Pancreas (tissue), 10 donors: ENCODE measurements at regions of chr17 and their contacts with region 1.

Region 1: GRCh38 chr17:11589716-11590115 is 8.6 kb upstream of the DNAH9 start:
- DNase-seq: peak in 4 of 6 donors; percentile 26 to 80 (median 72)
- ATAC-seq: peak; percentile 88 to 96 (median 94)
- H3K4me3 ChIP-seq: no peak overlapping the region
- H3K27ac ChIP-seq: no peak overlapping the region
- H3K4me1 ChIP-seq: peaks cover 0 to 10% (median 8%) of the 10 kb centered on the region in 3 donors
- H3K27me3 ChIP-seq: no peaks in the 10 kb centered on the region
- CTCF ChIP-seq: no peak

Region 2: GRCh38 chr17:11251561-11252107 is 338.1 kb before region 1 on chr17:
- intact Hi-C with region 1: no loop called
- DNase-seq: no peak
- ATAC-seq: peak in 3 of 4 donors; percentile 16 to 36 (median 33)
- H3K4me3 ChIP-seq: no peak overlapping the region
- H3K27ac ChIP-seq: no peak overlapping the region
- H3K4me1 ChIP-seq: no peaks in the 10 kb centered on the region
- H3K27me3 ChIP-seq: no peaks in the 10 kb centered on the region
- CTCF ChIP-seq: no peak

Region 3: GRCh38 chr17:11467639-11468038 is 122.1 kb before region 1 on chr17:
- intact Hi-C with region 1: no loop called
- DNase-seq: no peak
- ATAC-seq: no peak
- H3K4me3 ChIP-seq: no peak overlapping the region
- H3K27ac ChIP-seq: no peak overlapping the region
- H3K4me1 ChIP-seq: no peaks in the 10 kb centered on the region
- H3K27me3 ChIP-seq: no peaks in the 10 kb centered on the region
- CTCF ChIP-seq: no peak

Region 4: DNA sequence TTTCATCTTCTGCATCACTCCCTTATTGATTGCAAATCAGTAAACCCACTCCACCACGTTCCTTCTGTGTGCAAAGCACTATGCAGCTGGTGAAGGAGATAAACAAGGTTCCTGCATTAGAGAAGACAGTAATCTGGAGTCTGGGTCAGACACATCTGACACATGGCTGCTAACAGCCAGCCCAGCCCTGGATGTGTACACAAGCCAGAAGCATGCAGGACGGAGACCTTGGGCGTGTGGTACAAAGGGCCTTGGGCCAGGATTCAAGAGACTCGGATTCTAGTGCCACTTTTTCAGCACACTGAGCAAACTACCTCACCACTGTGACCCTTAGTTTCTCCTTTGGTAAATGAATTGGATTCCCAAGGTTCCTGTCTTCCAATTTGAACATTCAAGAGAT is 78.0 kb before region 1 on chr17:
- intact Hi-C with region 1: loop called in 1 of 3 experiments (anchors 10 kb)
- DNase-seq: peak; percentile 58 to 86 (median 77)
- ATAC-seq: peak; percentile 83 to 94 (median 92)
- H3K4me3 ChIP-seq: no peak overlapping the region
- H3K27ac ChIP-seq: no peak overlapping the region
- H3K4me1 ChIP-seq: peaks cover 4 to 17% (median 7%) of the 10 kb centered on the region in 3 donors
- H3K27me3 ChIP-seq: no peaks in the 10 kb centered on the region
- CTCF ChIP-seq: no peak